GM10248 (cell line): ENCODE measurements at regions of chr20 and their contacts with region 1.

Region 1: GRCh38 chr20:17604852-17605660 is 35.2 kb downstream of the DSTN start:
- DNase-seq: no peak
- CTCF ChIP-seq: no peak

Region 2: DNA sequence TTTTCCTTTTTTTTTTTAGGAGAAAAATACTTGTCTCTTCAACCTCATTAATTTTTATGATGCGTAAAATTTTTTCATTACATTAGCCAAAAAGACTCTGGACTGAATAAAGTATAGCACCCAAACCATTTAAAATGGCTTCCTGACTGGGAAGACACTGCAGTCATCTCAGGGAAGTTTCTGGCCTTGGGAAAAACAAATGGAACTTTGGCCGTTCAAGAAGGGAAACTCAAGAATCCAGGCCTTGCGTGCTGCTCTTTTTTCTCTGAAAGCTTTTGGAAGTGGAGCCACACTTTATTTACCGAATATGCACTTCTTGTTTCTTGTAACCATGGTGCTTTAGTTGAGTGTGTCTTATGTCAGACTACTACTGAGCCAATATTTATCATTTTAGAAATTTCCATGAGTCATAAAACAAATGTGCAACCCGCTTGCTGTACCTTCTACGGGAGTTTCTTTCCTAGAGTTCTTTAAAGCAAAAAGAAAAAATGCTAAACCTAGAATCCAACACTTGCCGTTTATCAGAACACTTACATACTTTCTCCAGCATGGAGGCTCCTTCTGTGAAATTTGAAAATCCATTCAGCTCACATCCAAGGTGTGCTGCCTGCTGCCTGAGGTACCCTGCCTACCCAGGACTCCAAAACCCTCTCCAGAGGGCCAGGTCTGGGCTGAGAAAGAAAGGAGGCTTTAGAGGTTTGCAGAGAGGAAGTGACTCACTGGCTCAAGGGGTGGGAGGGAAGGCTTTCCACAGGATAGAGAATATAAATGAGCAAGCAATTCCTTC is 46.7 kb before region 1 on chr20:
- CTCF ChIA-PET with region 1: no interaction called
- POLR2A ChIA-PET with region 1: no interaction called
- DNase-seq: no peak
- CTCF ChIP-seq: no peak

Region 3: GRCh38 chr20:17617551-17618223 is 12.6 kb after region 1 on chr20:
- CTCF ChIA-PET with region 1: interaction called, 19 read pairs
- POLR2A ChIA-PET with region 1: no interaction called
- DNase-seq: peak; percentile 74
- CTCF ChIP-seq: peak; percentile 48

Region 4: GRCh38 chr20:17825960-17826843 is 221.1 kb after region 1 on chr20:
- CTCF ChIA-PET with region 1: no interaction called
- POLR2A ChIA-PET with region 1: no interaction called
- DNase-seq: peak; percentile 84
- CTCF ChIP-seq: no peak